ENCODE measurements at regions of chr2 and their contacts with region 1.

Region 1: DNA sequence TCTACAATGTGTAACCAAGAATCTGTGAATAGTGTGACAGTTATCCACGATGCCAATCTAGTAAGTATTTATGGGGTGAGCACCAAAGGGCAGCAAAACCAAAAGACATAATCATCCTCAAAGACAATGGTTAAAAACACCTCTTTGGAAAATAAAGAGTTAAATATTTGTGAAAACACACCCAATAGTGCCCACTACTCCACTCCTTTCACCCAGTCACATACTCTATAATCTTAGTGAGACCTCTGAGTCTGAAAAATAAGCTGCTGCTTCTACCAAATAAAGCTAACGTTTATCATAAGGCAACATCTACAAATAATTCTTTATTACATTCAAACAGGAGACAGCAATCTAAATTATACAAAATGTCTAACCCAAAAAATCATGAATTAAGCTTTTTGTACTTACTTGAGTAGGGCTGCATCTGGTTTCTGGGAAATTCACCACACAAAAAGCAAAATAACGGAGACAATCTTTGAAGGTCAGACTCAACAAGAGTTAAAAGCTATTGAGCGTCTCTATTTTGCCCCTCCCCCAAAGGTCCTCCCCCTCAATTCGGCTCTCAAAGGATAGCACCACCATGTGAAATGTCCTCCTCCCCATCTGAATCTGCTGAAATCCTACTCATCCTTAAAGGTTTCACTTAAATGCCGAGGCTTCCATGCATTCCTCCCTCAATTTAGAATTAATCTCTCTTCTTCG is 2.0 kb downstream of the RAPH1 start:
- DNase-seq: no peak

Region 2: DNA sequence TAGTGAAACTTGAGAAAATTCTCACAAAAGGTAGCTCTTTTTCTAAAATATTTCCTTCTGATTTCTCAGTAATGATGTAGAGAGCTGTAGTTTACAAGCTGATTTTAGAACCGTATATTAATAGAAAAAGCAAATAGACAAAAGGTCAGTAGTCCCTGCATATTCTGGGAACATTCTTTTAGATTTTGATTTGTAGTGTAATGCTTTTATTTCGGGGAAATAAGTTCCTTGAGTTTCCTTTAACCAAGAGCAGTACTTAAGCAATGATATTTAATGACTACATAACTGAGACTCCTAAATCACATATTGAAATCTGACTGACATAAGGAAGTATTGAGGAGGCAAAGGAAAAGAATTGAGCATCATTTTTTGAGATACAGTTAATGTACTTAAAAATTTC is 496.1 kb before region 1 on chr2:
- CTCF ChIA-PET with region 1: interaction called, 11 read pairs
- POLR2A ChIA-PET with region 1: no interaction called
- DNase-seq: no peak

Region 3: GRCh38 chr2:203412546-203413331 is 120.4 kb before region 1 on chr2:
- CTCF ChIA-PET with region 1: no interaction called
- POLR2A ChIA-PET with region 1: no interaction called
- DNase-seq: no peak

Region 4: DNA sequence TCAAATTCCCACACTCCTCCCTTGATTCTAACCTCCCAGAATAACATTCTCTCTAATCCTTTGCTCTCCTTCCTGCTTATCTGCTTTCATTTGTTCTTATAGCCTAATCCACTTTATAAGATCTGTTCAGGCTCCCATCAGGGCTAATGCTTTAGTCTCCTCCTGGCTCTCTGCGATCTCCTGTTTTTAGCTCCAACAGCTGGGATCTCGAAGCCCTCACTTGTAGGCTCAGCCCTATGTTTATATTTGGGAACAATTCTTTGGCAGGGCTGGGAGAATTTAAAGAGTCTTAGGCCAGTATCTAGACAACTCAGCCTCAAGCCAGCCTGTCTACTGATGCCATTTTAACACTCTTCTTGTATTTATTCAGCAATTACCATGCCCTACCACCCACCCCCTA is 29.2 kb after region 1 on chr2:
- CTCF ChIA-PET with region 1: no interaction called
- POLR2A ChIA-PET with region 1: no interaction called
- DNase-seq: no peak

Region 5: DNA sequence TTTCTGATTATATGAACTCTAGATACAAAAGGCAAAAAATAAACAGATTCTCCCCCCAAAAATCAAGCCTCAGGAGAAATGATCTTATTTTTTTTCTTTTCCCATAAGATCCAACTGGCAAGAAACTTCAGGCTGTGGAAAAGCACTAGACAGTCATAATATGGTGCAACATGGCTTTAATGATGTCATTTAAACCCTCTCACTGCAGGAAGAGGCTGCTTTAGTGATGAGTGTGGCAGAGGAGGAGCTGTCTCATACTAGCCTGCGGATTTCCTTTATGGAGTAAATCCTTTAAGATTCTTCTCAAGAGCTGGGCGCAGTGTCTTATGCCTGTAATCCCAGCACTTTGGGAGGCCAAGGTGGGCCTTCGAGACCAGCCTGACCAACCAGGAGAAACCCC is 90.0 kb after region 1 on chr2:
- CTCF ChIA-PET with region 1: no interaction called
- POLR2A ChIA-PET with region 1: no interaction called
- DNase-seq: no peak

Region 6: DNA sequence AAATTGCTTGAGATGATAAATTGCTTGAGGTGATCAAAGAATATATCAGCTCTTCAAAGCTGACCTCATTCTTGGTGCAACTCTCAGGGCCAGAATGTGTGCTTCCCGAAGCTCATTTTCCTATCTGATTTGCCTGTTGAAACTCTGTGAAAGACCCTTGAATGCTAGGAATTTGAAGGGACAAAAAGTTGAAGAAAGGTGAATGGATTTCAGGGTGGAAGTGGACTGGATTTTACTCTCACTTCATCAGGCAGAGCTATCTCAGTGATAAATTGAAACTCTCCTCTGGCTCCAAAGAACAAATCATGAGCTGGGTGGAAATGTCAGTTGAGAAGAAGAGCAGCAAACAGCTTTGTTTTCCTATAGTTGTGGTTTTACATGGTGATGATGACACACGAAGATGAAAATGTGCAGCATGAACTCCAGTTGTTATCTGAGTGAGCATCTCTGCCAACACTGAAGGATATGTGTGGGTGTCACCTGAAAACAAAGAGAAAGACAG is 207.7 kb after region 1 on chr2:
- CTCF ChIA-PET with region 1: no interaction called
- POLR2A ChIA-PET with region 1: no interaction called
- DNase-seq: no peak

Measured in HEK293T (cell line).